CD8-positive, alpha-beta T cell (primary cell): ENCODE measurements at regions of chr12 and their contacts with region 1.

Region 1: GRCh38 chr12:93677195-93678064 is at the start of gene CRADD:
- DNase-seq: peak; percentile 65 to 99 (median 83)
- ATAC-seq: peak; percentile 95
- H3K4me3 ChIP-seq: peak within 1 kb of the TSS; percentile 67 to 83
- H3K4me3 Mint-ChIP-seq: peak within 1 kb of the TSS; percentile 98
- H3K27ac ChIP-seq: peak within 1 kb of the TSS; percentile 95 to 97
- H3K27ac Mint-ChIP-seq: peak within 1 kb of the TSS; percentile 100
- H3K4me1 ChIP-seq: peaks cover 8% of the 10 kb centered on the region
- H3K4me1 Mint-ChIP-seq: peaks cover 41% of the 10 kb centered on the region
- H3K27me3 ChIP-seq: no peaks in the 10 kb centered on the region
- H3K27me3 Mint-ChIP-seq: peaks cover 13% of the 10 kb centered on the region
- CTCF ChIP-seq: no peak
- total RNA-seq, gene CRADD: 5.3 to 5.7 TPM

Region 2: GRCh38 chr12:92928962-92929915 is 748.2 kb before region 1 on chr12 and contains the start of gene EEA1:
- CTCF ChIA-PET with region 1: no interaction called
- POLR2A ChIA-PET with region 1: no interaction called
- intact Hi-C with region 1: loop called in 1 of 2 experiments (anchors 2 kb)
- DNase-seq: peak; percentile 88 to 97 (median 95)
- ATAC-seq: peak; percentile 84
- H3K4me3 ChIP-seq: peak within 1 kb of the TSS; percentile 71 to 78
- H3K4me3 Mint-ChIP-seq: peak within 1 kb of the TSS; percentile 85
- H3K27ac ChIP-seq: peak within 1 kb of the TSS; percentile 85 to 90
- H3K27ac Mint-ChIP-seq: peak within 1 kb of the TSS; percentile 95
- H3K4me1 ChIP-seq: peaks cover 26% of the 10 kb centered on the region
- H3K4me1 Mint-ChIP-seq: peaks cover 40% of the 10 kb centered on the region
- H3K27me3 ChIP-seq: no peaks in the 10 kb centered on the region
- H3K27me3 Mint-ChIP-seq: no peaks in the 10 kb centered on the region
- CTCF ChIP-seq: no peak
- total RNA-seq, gene EEA1: 4.3 to 6.9 TPM

Region 3: GRCh38 chr12:93467351-93468007 is 210.0 kb before region 1 on chr12 and contains the start of gene MRPL42:
- CTCF ChIA-PET with region 1: no interaction called
- POLR2A ChIA-PET with region 1: no interaction called
- intact Hi-C with region 1: loop called (anchors 1 to 2 kb)
- DNase-seq: peak; percentile 88 to 96 (median 91)
- ATAC-seq: peak; percentile 94
- H3K4me3 ChIP-seq: peak within 1 kb of the TSS; percentile 64 to 95
- H3K4me3 Mint-ChIP-seq: peak within 1 kb of the TSS; percentile 93
- H3K27ac ChIP-seq: peak within 1 kb of the TSS; percentile 81 to 88
- H3K27ac Mint-ChIP-seq: peak within 1 kb of the TSS; percentile 95
- H3K4me1 ChIP-seq: peaks cover 15% of the 10 kb centered on the region
- H3K4me1 Mint-ChIP-seq: peaks cover 34% of the 10 kb centered on the region
- H3K27me3 ChIP-seq: no peaks in the 10 kb centered on the region
- H3K27me3 Mint-ChIP-seq: no peaks in the 10 kb centered on the region
- CTCF ChIP-seq: peak; percentile 71
- total RNA-seq, gene MRPL42: 31.6 to 33.2 TPM

Region 4: GRCh38 chr12:93699271-93700145 is 22.1 kb after region 1 on chr12:
- CTCF ChIA-PET with region 1: no interaction called
- POLR2A ChIA-PET with region 1: no interaction called
- intact Hi-C with region 1: no loop called
- DNase-seq: no peak
- ATAC-seq: no peak
- H3K4me3 ChIP-seq: no peak overlapping the region
- H3K4me3 Mint-ChIP-seq: no peak overlapping the region
- H3K27ac ChIP-seq: no peak overlapping the region
- H3K27ac Mint-ChIP-seq: no peak overlapping the region
- H3K4me1 ChIP-seq: no peaks in the 10 kb centered on the region
- H3K4me1 Mint-ChIP-seq: peaks cover 14% of the 10 kb centered on the region
- H3K27me3 ChIP-seq: no peaks in the 10 kb centered on the region
- H3K27me3 Mint-ChIP-seq: no peaks in the 10 kb centered on the region
- CTCF ChIP-seq: no peak

Region 5: GRCh38 chr12:93742110-93742934 is 64.9 kb after region 1 on chr12:
- CTCF ChIA-PET with region 1: no interaction called
- POLR2A ChIA-PET with region 1: no interaction called
- intact Hi-C with region 1: loop called (anchors 2 to 5 kb)
- DNase-seq: peak; percentile 10 to 72 (median 45)
- ATAC-seq: peak; percentile 87
- H3K4me3 ChIP-seq: peak overlapping the region; percentile 56 to 76
- H3K4me3 Mint-ChIP-seq: peak overlapping the region; percentile 91
- H3K27ac ChIP-seq: peak overlapping the region; percentile 34 to 47
- H3K27ac Mint-ChIP-seq: peak overlapping the region; percentile 79
- H3K4me1 ChIP-seq: peaks cover 8% of the 10 kb centered on the region
- H3K4me1 Mint-ChIP-seq: peaks cover 28% of the 10 kb centered on the region
- H3K27me3 ChIP-seq: no peaks in the 10 kb centered on the region
- H3K27me3 Mint-ChIP-seq: no peaks in the 10 kb centered on the region
- CTCF ChIP-seq: no peak

Region 6: DNA sequence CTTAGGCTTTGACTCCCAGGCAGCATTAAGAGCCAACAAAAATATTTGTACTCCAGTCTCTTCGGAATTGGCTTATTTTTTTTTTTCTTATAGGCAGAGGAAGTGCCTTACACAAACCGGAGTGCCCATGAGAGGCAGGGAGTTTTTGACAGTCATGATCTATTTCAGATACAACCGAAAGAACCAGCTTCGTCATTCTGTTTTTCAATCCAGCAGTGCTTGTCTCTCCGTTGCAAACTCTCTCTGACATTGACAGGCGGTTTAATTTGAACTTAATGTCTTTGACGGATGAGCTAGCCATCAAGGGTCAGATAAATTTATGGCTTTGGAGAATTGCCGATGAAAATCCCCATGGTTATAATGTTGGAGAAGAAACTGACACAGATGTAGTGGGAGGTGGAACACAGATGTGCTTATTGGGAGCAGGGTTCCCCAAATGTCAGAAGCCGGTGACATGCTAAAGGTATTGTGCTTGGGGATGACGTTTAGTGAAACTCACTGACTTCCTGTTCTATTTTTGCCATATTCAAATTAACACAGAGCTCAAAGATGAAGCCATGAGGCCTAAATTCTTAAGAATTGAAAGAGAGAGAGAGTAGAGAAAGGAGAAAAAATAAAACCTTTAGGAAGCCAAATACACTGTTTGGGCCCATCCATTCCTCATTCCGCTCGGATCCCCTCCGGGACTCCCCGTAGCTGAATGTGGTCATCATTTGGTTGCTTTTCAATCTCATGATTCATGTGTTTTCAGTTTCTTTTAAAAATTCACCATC is 530.6 kb after region 1 on chr12:
- CTCF ChIA-PET with region 1: no interaction called
- POLR2A ChIA-PET with region 1: no interaction called
- intact Hi-C with region 1: loop called in 1 of 2 experiments (anchors 5 kb)
- DNase-seq: peak in 6 of 9 experiments; percentile 11 to 73 (median 42)
- ATAC-seq: peak; percentile 83
- H3K4me3 ChIP-seq: peak overlapping the region; percentile 36
- H3K4me3 Mint-ChIP-seq: peak overlapping the region; percentile 79
- H3K27ac ChIP-seq: peak overlapping the region; percentile 48 to 82
- H3K27ac Mint-ChIP-seq: peak overlapping the region; percentile 94
- H3K4me1 ChIP-seq: peaks cover 50% of the 10 kb centered on the region
- H3K4me1 Mint-ChIP-seq: peaks cover 56% of the 10 kb centered on the region
- H3K27me3 ChIP-seq: no peaks in the 10 kb centered on the region
- H3K27me3 Mint-ChIP-seq: no peaks in the 10 kb centered on the region
- CTCF ChIP-seq: no peak

Region 7: DNA sequence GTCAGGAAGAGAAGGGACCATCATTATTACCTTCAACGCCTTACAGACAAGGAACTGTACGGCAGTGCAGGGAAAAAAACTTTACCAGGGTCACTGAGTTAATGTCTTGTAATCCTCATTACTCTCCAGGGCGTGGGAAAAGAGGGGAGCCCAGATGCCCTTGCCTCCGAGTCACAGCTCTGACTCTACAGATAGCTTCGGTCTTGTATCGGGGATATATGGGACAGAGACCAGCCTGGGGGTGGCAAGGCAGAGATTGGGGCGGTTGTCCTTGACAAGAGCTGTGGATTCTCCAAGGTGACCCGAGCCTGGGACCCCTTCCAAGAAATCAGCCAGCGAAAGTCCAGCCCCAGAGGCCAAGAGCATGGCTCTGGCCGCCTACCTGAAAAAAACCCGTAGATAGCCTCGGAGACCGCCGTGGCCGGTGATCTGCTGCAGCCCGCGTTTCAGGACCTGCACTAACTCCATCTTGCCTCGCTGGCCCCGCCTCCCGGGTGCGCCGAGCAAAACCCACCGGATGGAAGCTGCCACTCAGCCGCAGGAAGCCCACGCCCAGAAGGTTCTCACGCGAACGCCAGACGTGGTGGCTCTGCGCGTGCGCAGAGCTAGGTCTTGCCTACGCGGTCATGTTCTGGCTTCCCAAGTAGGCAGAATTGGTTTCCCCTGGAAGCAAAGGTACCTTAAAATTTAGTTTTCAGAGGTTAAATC is 1325.9 kb after region 1 on chr12 and contains the start of gene NDUFA12:
- CTCF ChIA-PET with region 1: no interaction called
- POLR2A ChIA-PET with region 1: no interaction called
- intact Hi-C with region 1: loop called (anchors 2 to 5 kb)
- DNase-seq: peak; percentile 87 to 98 (median 94)
- ATAC-seq: peak; percentile 99
- H3K4me3 ChIP-seq: peak within 1 kb of the TSS; percentile 74 to 97
- H3K4me3 Mint-ChIP-seq: peak within 1 kb of the TSS; percentile 93
- H3K27ac ChIP-seq: peak within 1 kb of the TSS; percentile 64 to 82
- H3K27ac Mint-ChIP-seq: peak within 1 kb of the TSS; percentile 94
- H3K4me1 ChIP-seq: peaks cover 46% of the 10 kb centered on the region
- H3K4me1 Mint-ChIP-seq: peaks cover 57% of the 10 kb centered on the region
- H3K27me3 ChIP-seq: no peaks in the 10 kb centered on the region
- H3K27me3 Mint-ChIP-seq: no peaks in the 10 kb centered on the region
- CTCF ChIP-seq: no peak
- total RNA-seq, gene NDUFA12: 37.4 to 42.4 TPM

Region 8: DNA sequence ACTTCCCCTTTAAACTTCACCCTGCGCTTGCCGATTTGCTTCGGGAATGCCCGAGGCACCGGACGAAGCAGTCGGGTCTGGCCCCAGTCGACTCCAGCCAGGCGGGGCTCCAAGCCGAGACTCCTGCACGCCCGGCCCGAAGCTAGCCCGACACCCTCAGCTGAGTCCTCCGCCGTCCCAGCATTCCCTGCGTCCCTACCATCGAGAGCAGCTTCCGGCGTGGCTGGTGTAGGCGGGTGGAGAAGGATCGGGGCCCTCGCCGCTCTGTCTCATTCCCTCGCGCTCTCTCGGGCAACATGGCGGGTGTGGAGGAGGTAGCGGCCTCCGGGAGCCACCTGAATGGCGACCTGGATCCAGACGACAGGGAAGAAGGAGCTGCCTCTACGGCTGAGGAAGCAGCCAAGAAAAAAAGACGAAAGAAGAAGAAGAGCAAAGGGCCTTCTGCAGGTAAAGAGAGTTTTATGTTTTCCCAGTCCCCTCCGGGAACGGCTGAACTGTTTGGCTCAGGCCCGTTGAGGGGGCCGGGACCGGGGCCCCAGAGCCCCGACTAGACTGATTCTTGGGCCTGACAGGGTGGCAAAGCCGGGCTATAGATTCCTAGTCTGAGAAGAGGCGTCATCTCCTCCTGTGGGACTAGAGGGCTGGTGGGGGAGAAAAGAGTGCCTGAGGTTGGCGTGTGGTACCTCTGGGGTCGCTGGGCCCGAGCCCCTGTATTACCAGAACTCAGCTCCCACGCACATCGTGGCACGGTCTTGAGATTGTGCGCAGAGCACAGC is 1796.6 kb after region 1 on chr12 and contains the start of gene METAP2:
- CTCF ChIA-PET with region 1: no interaction called
- POLR2A ChIA-PET with region 1: no interaction called
- intact Hi-C with region 1: loop called (anchors 5 kb)
- DNase-seq: peak; percentile 73 to 94 (median 91)
- ATAC-seq: peak; percentile 97
- H3K4me3 ChIP-seq: peak within 1 kb of the TSS; percentile 77 to 88
- H3K4me3 Mint-ChIP-seq: peak within 1 kb of the TSS; percentile 99
- H3K27ac ChIP-seq: peak within 1 kb of the TSS; percentile 78 to 84
- H3K27ac Mint-ChIP-seq: peak within 1 kb of the TSS; percentile 98
- H3K4me1 ChIP-seq: peaks cover 29% of the 10 kb centered on the region
- H3K4me1 Mint-ChIP-seq: peaks cover 54% of the 10 kb centered on the region
- H3K27me3 ChIP-seq: no peaks in the 10 kb centered on the region
- H3K27me3 Mint-ChIP-seq: no peaks in the 10 kb centered on the region
- CTCF ChIP-seq: no peak
- total RNA-seq, gene METAP2: 68.3 to 69.9 TPM